ENCODE measurements at regions of chrX and their contacts with region 1.

Region 1: DNA sequence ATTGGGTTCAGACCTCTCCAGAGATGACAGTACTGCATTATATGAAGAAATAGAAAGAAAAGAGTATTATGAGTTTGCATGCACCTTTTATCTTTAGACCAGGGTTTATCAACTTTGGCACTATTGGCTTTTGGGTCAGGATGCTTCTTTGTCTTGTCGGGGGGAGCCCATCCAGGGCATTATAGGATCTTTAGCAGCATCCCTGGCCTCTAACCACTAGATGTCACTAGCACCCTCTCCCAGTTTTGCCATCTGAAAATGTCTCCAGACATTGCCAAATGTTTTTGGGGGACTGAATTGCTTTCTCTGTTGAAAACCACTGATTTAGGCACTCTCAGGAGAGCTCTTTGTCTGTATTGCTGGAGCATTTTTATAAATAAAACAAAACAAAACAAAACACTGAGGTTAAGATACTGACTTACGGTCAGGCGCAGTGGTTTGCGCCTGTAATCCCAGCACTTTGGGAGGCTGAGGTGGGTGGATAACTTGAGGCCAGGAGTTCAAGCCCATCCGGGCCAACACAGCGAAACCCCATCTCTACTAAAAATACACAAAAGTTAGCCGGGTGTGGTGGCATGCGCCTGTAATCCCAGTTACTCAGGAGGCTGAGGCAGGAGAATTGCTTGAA is 23.6 kb downstream of the CA5B start:
- DNase-seq: no peak
- ATAC-seq: peak in 3 of 4 donors; percentile 46 to 58 (median 52)
- H3K4me3 ChIP-seq: no peak overlapping the region
- H3K27ac ChIP-seq: no peak overlapping the region
- H3K4me1 ChIP-seq: no peaks in the 10 kb centered on the region
- H3K27me3 ChIP-seq: no peaks in the 10 kb centered on the region
- CTCF ChIP-seq: peak; percentile 58

Region 2: DNA sequence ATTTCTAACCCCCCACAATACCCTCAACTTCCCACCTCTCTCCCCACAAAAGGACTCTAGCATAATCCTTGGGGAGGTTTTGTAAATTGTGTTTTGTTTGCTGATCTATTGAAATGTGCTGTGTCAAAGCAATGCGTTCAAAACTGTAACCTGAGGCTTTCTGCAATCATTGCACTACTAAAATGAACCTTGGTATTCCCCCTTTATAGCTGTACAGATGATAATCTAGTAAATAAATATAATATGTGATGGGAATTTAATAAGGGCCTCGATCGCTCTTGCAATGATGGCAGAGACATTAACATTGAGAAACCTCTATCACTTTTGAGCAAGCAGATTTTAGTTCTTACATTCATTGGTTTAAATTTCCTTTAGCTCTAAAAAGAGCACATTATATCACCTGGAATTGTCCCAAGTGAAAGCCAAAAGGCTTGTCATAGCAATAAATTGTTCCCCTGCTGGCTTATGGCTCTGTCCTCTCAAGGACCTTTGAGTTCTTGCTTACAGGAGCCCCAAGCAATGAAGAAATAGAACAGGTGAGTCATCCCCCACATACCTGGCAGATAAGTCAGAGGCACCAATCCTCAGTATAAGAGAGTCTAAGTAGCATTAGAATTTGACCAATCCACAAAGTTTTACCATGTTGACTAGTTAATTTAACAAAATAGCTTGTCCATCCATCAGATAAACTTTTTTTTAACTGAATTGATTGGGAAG is 142.5 kb before region 1 on chrX:
- intact Hi-C with region 1: no loop called
- DNase-seq: no peak
- ATAC-seq: peak; percentile 91 to 98 (median 96)
- H3K4me3 ChIP-seq: no peak overlapping the region
- H3K27ac ChIP-seq: peak overlapping the region; percentile 42
- H3K4me1 ChIP-seq: no peaks in the 10 kb centered on the region
- H3K27me3 ChIP-seq: peaks cover 0 to 20% (median 0%) of the 10 kb centered on the region in 3 donors
- CTCF ChIP-seq: no peak

Region 3: DNA sequence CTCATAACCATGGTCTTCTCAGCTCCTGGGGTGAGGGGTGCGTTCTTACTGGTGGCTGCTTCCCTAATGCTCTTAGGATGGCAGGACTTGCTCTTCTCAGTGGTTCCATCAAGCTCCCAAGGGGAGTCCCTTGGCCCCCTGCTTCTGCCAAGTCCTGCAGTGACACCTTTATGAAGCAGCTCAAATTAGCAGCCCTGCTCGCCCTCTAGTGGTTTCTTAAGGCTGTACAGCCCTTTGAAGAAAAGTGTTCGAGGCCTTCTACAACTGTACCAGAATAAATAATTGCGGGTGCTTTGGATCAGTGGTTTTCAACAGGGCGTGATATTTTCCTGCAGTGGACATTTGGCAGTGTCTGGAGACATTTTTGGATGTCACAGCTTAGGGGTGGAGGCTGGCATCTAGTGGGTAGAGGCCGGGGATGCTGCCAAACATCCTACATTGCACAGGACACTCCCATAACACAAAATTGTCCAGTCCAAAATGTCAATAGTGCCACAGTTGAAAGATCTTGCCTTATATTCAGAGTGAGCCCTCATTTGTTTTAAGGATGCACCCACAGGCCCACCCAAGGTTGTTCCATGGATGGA is 683.6 kb after region 1 on chrX:
- intact Hi-C with region 1: loop called in 1 of 2 experiments (anchors 10 kb)
- DNase-seq: no peak
- ATAC-seq: peak; percentile 47 to 74 (median 66)
- H3K4me3 ChIP-seq: no peak overlapping the region
- H3K27ac ChIP-seq: no peak overlapping the region
- H3K4me1 ChIP-seq: no peaks in the 10 kb centered on the region
- H3K27me3 ChIP-seq: no peaks in the 10 kb centered on the region
- CTCF ChIP-seq: peak; percentile 55